Pancreas (tissue), 10 donors: ENCODE measurements at regions of chr4 and their contacts with region 1.

Region 1: DNA sequence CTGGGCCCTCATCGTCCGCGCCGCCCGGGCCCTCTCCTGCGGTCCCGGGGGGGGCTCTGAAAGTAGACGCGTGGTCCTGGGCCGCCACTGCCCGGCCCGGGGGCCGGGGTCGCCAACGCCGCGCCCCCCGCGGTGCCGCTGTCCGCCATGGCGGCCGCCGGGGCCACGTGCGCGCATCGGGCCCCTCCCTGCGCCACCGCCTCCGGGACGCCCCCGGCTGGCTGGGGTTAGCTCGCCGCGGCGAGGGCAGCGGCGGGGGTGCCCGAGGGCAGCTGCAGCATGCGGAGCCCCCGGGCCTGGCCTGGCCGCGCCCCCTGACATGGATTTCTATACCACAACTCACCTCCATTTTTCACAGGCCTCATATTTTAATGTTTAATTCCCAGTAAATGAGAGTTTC is 61.8 kb downstream of the ELF2 start:
- DNase-seq: no peak
- ATAC-seq: no peak
- H3K4me3 ChIP-seq: no peak overlapping the region
- H3K27ac ChIP-seq: no peak overlapping the region
- H3K4me1 ChIP-seq: no peaks in the 10 kb centered on the region
- H3K27me3 ChIP-seq: no peaks in the 10 kb centered on the region
- CTCF ChIP-seq: no peak

Region 2: DNA sequence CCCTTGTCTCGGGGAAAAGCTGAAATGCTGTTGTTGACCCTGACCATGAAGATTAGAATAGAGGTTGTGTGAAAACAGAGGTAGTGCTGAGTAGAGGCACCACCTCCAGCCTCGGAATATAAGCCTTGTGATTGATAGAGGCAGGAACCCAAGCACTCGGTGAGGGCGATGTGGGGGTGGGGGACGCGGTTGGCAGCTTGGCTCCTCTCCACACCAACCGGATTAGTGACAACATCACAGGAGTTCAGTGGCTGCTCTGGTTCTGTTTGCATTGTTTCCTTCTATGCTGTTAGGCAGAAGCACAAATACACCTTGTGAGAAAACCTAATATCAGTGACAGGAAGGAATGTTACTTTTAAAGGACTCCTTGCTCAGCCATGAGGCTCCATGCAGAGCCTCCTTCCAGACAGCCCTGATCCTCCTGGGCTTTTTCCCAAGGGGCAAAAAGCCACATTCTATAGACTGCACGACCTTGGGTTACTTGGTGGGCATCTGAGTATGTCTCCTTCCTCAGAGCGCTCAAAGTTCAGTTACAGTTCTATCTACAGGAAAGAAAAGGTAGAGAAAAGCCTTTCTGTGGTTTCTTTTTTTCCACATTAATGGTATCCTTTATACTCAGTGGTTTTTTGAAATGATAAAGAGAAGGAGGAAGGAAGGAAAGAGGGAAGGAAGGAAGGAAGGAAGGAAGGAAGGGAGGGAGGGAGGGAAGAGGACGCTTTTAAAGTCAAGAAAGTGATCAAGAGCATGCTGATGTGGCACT is 250.1 kb before region 1 on chr4:
- intact Hi-C with region 1: no loop called
- DNase-seq: peak in 3 of 6 donors; percentile 17 to 44 (median 26)
- ATAC-seq: peak in 3 of 4 donors; percentile 63 to 81 (median 80)
- H3K4me3 ChIP-seq: no peak overlapping the region
- H3K27ac ChIP-seq: no peak overlapping the region
- H3K4me1 ChIP-seq: no peaks in the 10 kb centered on the region
- H3K27me3 ChIP-seq: no peaks in the 10 kb centered on the region
- CTCF ChIP-seq: no peak

Region 3: DNA sequence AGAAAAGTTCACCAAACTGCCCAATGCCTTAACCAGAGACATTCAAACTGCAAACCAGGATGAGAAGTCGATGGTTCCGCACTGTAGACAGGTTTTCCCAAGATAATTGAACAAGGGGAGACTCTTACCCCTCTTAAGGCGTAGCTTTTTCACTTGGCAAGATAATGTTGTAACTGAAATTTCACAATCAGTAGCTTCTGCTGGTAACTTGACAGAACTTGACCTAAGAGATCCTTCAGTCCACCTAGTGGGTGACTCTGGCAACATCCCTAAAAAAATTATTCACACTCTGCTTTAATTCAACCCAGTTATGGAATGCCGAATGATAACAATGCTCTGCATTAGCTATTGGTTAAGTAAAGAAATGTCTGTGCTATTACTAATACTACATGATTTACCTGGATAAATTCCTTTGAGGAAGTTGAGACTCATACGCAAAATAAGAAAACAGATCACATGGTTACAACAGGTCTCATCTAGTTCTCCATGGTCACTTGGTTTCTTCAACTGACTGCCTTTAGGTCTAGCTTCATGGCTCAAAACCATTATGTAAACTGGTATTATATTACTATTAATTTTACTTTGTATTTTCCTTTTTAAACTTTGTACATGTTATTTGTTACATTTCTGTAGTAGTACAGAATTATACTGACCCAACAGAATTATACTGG is 52.7 kb after region 1 on chr4:
- intact Hi-C with region 1: loop called in 1 of 3 experiments (anchors 10 kb)
- DNase-seq: no peak
- ATAC-seq: peak; percentile 60 to 86 (median 82)
- H3K4me3 ChIP-seq: no peak overlapping the region
- H3K27ac ChIP-seq: no peak overlapping the region
- H3K4me1 ChIP-seq: peaks cover 0 to 19% (median 7%) of the 10 kb centered on the region in 3 donors
- H3K27me3 ChIP-seq: no peaks in the 10 kb centered on the region
- CTCF ChIP-seq: peak in 2 of 4 donors; percentile 21 to 25

Region 4: DNA sequence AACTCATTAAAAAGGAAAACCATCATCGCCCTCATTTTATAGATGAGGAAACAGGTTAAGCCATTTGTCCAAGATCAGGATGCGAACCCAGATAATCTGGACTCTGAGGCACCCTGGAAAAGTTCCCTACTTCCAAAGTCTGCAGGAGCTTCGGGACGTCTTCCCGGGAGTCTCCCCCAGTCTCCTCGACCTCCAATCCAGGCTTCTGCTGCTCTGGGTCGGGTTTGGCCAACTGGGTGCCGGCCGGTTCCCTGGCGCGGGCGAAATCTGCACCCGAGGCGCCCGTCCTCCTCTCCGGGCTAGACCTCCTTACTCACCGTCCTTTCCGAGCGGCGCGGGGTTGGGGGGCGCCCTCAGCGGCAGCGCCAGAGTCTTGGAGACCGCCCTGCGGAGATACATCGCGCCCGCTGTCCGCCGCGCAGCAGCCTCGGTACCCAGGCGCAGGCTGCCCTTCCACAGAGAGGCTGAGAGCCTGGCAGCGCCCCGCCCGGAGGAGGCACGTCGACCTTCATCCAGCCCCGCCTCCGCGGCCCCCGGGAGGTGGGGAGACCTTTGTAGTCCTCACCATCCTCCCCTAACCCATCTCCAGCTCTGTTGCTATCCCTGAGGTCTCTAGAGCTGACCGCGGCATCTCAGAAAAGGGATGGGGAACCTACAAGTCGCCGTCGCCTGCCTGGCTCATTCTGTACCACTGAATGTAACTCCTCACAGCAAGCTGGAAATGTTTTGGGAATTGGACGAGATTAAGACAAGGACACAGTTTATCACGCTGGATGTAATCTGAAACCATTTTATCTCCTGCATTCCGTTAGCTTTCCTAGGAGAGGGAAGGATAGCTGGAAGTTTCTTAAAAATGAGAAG is 164.8 kb after region 1 on chr4 and contains the start of gene MGARP:
- intact Hi-C with region 1: loop called in 1 of 3 experiments (anchors 10 kb)
- DNase-seq: peak in 4 of 6 donors; percentile 13 to 66 (median 40)
- ATAC-seq: peak; percentile 56 to 75 (median 73)
- H3K4me3 ChIP-seq: peak within 1 kb of the TSS in 2 of 4 donors; percentile 23 to 39
- H3K27ac ChIP-seq: no peak within 1 kb of the TSS
- H3K4me1 ChIP-seq: peaks cover 0 to 3% (median 0%) of the 10 kb centered on the region in 3 donors
- H3K27me3 ChIP-seq: peaks cover 0 to 15% (median 2%) of the 10 kb centered on the region in 4 donors
- CTCF ChIP-seq: no peak
- total RNA-seq, gene MGARP: 0.25 TPM in 2 of 6 donors, not detected in the others